ENCODE measurements at regions of chr10 and their contacts with region 1.

Region 1: DNA sequence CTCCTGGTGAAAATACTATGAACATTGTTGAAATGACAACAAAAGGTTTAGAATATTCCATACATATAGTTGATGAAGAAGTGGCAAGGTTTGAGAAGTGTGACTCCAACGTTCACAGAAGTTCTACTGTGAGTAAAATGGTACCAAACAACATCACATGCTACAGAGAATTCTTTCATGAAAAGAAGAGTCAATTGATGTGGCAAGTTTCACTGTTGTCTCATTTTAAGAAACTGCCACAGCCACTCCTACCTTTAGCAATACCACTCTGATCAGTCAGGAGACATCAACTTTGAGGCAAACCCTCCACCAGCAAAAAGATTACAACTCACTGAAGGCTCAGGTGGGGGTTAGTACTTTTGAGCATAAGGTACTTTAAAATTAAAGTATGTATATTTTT is 693.3 kb downstream of the GRID1 start:
- DNase-seq: no peak
- H3K4me3 Mint-ChIP-seq: no peak overlapping the region
- H3K27ac Mint-ChIP-seq: no peak overlapping the region
- H3K4me1 Mint-ChIP-seq: peaks cover 9% of the 10 kb centered on the region
- H3K27me3 Mint-ChIP-seq: peaks cover 3% of the 10 kb centered on the region

Region 2: DNA sequence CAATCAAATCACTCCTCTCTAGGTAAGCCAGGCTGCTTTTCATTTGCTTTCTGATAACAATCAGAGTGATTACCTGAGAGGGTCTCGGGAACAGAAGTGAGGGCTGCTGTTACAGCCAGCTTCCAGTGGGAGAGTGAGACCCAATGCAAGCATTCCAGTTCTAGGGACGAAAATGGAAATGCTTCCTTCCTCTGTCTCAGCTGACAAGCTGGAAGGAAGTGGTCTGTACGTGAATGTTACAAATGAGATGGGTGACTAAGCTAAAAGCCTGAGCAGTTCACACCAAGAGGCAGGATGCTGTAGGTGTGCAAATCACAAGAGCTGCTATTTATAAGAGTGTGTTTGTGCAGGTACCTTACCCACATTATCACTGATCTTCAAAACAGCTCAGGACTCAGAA is 79.0 kb before region 1 on chr10:
- CTCF ChIA-PET with region 1: no interaction called
- intact Hi-C with region 1: loop called (anchors 1 kb)
- DNase-seq: no peak
- H3K4me3 Mint-ChIP-seq: no peak overlapping the region
- H3K27ac Mint-ChIP-seq: no peak overlapping the region
- H3K4me1 Mint-ChIP-seq: peaks cover 19% of the 10 kb centered on the region
- H3K27me3 Mint-ChIP-seq: no peaks in the 10 kb centered on the region

Region 3: DNA sequence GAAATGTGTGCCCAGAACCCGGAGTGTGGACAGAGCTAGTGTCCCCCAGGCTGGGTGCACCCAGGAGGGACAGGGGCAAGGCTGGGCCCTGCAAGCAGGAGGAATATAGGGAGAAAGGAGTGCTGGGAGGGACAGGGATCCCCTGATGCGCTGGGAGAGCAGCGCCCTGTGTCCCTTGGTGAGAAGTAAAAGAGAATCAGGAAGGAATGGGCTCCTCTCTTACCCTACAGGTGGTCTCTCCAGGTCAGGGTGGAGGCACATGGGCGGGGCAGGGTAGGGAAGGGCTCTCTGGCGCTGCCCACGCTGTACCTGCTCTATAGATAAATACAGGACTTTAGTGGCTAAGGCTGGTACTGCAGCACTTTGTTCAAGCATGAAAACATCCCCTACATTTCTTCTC is 60.4 kb before region 1 on chr10:
- CTCF ChIA-PET with region 1: no interaction called
- intact Hi-C with region 1: loop called (anchors 5 kb)
- DNase-seq: no peak
- H3K4me3 Mint-ChIP-seq: no peak overlapping the region
- H3K27ac Mint-ChIP-seq: no peak overlapping the region
- H3K4me1 Mint-ChIP-seq: peaks cover 48% of the 10 kb centered on the region
- H3K27me3 Mint-ChIP-seq: no peaks in the 10 kb centered on the region

Region 4: GRCh38 chr10:86046845-86047460 is 373.7 kb after region 1 on chr10:
- CTCF ChIA-PET with region 1: no interaction called
- intact Hi-C with region 1: loop called (anchors 5 kb)
- DNase-seq: peak; percentile 48
- H3K4me3 Mint-ChIP-seq: no peak overlapping the region
- H3K27ac Mint-ChIP-seq: no peak overlapping the region
- H3K4me1 Mint-ChIP-seq: peaks cover 17% of the 10 kb centered on the region
- H3K27me3 Mint-ChIP-seq: peaks cover 18% of the 10 kb centered on the region

Measured in activated naive CD4-positive, alpha-beta T cell treated with anti-CD3 and anti-CD28 coated beads for 36 hours (primary cell).